Left cardiac atrium (tissue), 4 donors: ENCODE measurements at regions of chr2 and their contacts with region 1.

Region 1: DNA sequence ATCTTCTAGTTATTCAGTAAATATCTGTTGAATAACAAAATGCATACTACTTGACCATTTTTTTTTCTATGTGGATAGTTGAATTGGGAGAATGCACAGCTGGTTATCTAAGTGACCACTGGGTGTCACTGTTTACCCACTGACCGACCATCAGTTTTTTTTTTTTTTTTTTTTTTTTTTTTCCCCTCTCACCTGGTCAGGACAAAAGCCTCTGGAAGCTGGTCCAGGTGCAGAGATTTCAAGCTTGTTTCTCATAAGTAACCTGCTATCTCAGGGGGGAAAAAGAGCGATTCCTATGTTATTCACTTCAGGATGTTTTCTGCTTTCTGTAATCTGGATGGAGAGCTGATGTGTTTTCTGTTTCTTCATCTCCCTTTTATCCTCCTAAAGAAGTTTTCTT is 256.0 kb downstream of the DCDC2C start:
- DNase-seq: no peak
- ATAC-seq: no peak

Region 2: DNA sequence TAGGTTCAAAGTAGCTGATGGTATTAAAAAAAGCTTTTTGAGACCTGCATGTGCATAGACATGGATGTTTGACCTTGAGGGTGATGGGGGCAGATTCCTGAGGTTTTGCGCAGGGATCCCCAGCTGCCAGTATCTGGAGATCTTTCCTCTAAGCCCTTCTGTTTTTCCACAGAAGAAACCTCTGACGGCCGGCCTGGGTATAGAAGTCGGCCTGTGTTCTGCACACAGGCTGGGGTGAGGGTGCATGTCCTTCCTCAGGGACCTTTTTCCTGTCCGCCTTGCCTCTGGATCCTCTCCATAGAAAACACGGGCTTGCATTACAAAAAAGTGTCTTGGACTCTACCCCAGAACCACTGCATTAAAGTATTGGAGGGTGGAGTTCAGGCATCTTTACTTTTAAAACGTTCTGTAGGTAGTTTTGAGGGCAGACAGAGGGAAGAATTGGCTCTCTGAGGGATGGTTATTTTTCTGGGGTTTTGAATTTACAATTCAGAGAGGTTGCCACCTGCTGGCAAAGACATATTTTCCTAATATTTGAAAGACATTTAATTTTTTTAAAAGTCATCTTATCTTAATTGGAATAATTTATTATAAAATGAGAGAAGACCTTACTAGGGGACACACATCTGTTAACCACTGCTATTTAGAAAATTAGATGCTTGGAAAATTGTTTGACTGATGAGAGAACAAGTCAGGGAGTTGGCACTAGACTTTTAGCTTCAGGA is 94.6 kb after region 1 on chr2:
- intact Hi-C with region 1: loop called in 1 of 2 experiments (anchors 5 kb)
- DNase-seq: no peak
- ATAC-seq: no peak

Region 3: DNA sequence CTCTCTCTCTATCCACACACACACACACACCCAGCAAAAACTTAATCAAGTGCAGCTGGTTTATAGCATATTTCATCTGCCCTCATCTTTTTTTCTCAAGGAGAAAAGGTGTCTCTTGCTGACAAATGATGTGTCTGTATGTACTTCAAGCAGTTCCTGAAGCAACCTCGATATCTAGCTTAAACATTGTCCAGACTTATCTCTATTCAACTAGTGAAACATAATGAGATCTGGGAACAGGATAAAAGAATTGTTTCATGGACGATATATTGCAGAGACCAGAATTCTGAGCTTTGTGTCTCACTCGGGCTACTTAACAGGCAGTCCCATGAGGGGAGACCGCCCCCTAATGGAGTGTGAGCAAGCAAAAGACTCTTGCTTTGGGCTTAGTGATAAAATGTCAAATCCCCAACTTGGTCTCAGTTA is 803.6 kb after region 1 on chr2:
- intact Hi-C with region 1: loop called in 1 of 2 experiments (anchors 5 kb)
- DNase-seq: peak; percentile 21
- ATAC-seq: no peak

Region 4: DNA sequence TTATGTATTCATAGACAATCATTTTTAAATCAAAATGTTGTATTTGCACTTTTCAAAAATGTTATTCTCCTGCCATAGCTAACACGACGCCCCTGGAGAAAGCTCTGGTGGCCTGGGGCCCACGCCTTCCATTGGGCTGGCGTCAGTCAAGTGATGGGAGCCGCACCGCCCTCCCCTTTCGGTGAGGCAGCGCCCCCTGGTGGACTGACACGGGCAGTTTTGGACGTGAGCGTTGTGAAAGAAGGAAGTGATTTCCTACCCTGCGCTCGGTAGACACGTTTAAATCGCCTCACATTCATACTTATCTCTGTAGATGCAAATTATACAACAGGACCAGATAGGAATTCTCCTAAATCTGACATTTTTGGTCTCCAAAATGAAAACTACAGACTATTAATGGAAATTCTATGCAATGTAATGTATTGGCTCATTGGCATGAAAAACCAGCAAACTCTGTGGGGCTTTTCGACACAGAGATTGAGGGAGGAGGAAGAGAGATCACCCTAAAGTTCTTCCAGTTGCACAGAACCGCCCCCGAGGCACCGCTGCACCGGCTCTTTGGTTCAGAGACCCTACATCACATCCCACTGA is 1406.6 kb after region 1 on chr2:
- intact Hi-C with region 1: loop called in 1 of 2 experiments (anchors 5 kb)
- DNase-seq: peak; percentile 59
- ATAC-seq: peak; percentile 83 to 84